B cell (primary cell): ENCODE measurements at regions of chr1 and their contacts with region 1.

Region 1: GRCh38 chr1:37890378-37891014 is 31.1 kb upstream of the MTF1 start:
- DNase-seq: peak; percentile 69
- ATAC-seq: peak; percentile 61
- H3K4me3 ChIP-seq: no peak overlapping the region
- H3K4me3 Mint-ChIP-seq: no peak overlapping the region
- H3K27ac ChIP-seq: peak overlapping the region in 1 of 2 donors; percentile 43
- H3K27ac Mint-ChIP-seq: peak overlapping the region; percentile 23
- H3K4me1 ChIP-seq: no peaks in the 10 kb centered on the region
- H3K4me1 Mint-ChIP-seq: peaks cover 2% of the 10 kb centered on the region
- H3K27me3 ChIP-seq: no peaks in the 10 kb centered on the region
- H3K27me3 Mint-ChIP-seq: no peaks in the 10 kb centered on the region
- CTCF ChIP-seq: peak; percentile 81

Region 2: GRCh38 chr1:37926038-37926924 is 35.8 kb after region 1 on chr1:
- CTCF ChIA-PET with region 1: interaction called, 11 read pairs
- POLR2A ChIA-PET with region 1: no interaction called
- intact Hi-C with region 1: no loop called
- DNase-seq: peak; percentile 37
- ATAC-seq: no peak
- H3K4me3 ChIP-seq: peak overlapping the region in 2 of 5 experiments; percentile 28 to 42
- H3K4me3 Mint-ChIP-seq: peak overlapping the region; percentile 77
- H3K27ac ChIP-seq: peak overlapping the region; percentile 37 to 72
- H3K27ac Mint-ChIP-seq: peak overlapping the region; percentile 81
- H3K4me1 ChIP-seq: peaks cover 58 to 76% of the 10 kb centered on the region in 2 donors
- H3K4me1 Mint-ChIP-seq: peaks cover 65% of the 10 kb centered on the region
- H3K27me3 ChIP-seq: no peaks in the 10 kb centered on the region
- H3K27me3 Mint-ChIP-seq: no peaks in the 10 kb centered on the region
- CTCF ChIP-seq: no peak

Region 3: GRCh38 chr1:37931361-37932158 is 41.1 kb after region 1 on chr1:
- CTCF ChIA-PET with region 1: interaction called, 76 read pairs
- POLR2A ChIA-PET with region 1: no interaction called
- intact Hi-C with region 1: loop called (anchors 1 kb)
- DNase-seq: peak; percentile 97
- ATAC-seq: peak; percentile 99
- H3K4me3 ChIP-seq: peak overlapping the region; percentile 69 to 98 (median 97)
- H3K4me3 Mint-ChIP-seq: peak overlapping the region; percentile 89
- H3K27ac ChIP-seq: peak overlapping the region in 1 of 2 donors; percentile 80
- H3K27ac Mint-ChIP-seq: peak overlapping the region; percentile 83
- H3K4me1 ChIP-seq: peaks cover 18 to 28% of the 10 kb centered on the region in 2 donors
- H3K4me1 Mint-ChIP-seq: peaks cover 42% of the 10 kb centered on the region
- H3K27me3 ChIP-seq: no peaks in the 10 kb centered on the region
- H3K27me3 Mint-ChIP-seq: no peaks in the 10 kb centered on the region
- CTCF ChIP-seq: no peak

Region 4: DNA sequence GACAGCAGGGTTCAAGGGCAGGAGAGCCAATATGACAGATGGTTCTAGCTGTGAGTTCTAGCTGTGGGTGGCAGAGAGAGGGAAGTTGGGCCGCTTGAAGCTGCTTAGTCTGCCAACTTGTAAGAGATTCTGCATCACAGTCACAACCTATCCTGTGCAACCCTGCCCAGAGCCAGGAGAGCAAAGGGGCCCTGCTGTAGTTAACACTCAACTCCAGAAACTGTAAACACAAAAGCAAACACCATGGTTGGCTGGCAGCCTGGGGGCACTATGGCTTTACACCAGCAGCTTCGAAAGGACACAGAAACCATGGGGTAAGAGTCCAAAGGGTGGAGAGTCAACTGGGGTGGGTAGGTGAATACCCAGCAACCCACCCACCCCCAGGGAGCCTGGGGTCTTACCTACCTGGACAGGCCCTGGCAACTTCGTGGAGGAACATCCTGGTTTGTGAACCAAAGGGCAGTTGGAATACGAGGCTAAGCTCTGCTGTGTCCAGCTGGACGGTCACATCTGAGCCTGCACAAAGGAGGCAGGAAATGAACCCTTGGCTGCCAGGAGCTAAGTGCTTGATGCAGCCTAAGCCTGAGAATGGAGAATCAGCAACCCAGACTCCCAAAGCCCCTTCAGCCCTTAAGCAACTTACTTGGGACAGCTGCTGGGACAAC is 49.9 kb after region 1 on chr1:
- CTCF ChIA-PET with region 1: interaction called, 76 read pairs
- POLR2A ChIA-PET with region 1: no interaction called
- intact Hi-C with region 1: loop called (anchors 1 kb)
- DNase-seq: no peak
- ATAC-seq: no peak
- H3K4me3 ChIP-seq: no peak overlapping the region
- H3K4me3 Mint-ChIP-seq: no peak overlapping the region
- H3K27ac ChIP-seq: no peak overlapping the region
- H3K27ac Mint-ChIP-seq: no peak overlapping the region
- H3K4me1 ChIP-seq: no peaks in the 10 kb centered on the region
- H3K4me1 Mint-ChIP-seq: peaks cover 1% of the 10 kb centered on the region
- H3K27me3 ChIP-seq: no peaks in the 10 kb centered on the region
- H3K27me3 Mint-ChIP-seq: no peaks in the 10 kb centered on the region
- CTCF ChIP-seq: no peak

Region 5: DNA sequence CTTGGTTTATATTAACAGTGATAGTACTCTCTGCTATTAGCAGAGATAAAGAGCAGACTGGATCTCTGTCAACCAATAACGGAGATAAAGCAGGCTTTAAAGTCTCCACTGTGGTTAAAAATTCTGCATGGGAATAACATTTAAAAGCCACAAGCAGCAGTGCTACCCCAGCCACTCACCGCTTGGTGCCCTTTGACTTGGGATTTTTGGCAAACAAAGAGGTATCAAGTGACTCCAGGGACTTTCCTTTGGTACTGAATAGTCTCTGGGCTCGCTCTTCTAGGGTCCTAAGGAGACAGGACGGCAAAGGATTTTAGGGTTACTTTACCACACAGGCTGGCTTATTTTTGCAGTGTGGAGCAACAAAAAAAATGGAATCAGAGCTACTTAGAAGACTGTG is 88.0 kb after region 1 on chr1:
- CTCF ChIA-PET with region 1: interaction called, 63 read pairs
- POLR2A ChIA-PET with region 1: interaction called, 4 read pairs
- intact Hi-C with region 1: no loop called
- DNase-seq: no peak
- ATAC-seq: no peak
- H3K4me3 ChIP-seq: no peak overlapping the region
- H3K4me3 Mint-ChIP-seq: no peak overlapping the region
- H3K27ac ChIP-seq: no peak overlapping the region
- H3K27ac Mint-ChIP-seq: no peak overlapping the region
- H3K4me1 ChIP-seq: no peaks in the 10 kb centered on the region
- H3K4me1 Mint-ChIP-seq: no peaks in the 10 kb centered on the region
- H3K27me3 ChIP-seq: no peaks in the 10 kb centered on the region
- H3K27me3 Mint-ChIP-seq: no peaks in the 10 kb centered on the region
- CTCF ChIP-seq: no peak

Region 6: DNA sequence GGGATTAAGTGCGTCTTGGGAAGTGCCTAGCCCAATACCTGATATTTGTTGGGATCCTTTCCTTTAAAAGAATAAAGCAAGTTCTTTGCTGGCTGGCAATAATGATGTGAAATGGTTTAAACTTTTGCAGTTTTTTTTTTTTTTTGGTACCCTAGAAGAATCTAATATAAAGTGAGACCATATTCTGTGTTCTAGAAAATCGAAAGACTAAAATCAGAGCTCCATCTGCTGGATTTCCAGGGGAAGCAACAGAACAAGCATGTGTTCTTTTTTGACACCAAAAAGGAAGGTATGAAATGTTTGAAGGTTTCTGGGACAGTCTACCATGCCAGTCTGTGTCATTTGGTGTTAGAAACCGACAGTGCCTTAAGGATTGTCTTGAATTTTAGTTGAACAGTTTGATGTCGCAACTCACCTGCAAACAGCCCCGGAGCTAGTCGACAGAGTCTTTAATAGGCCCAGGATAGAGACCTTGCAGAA is 128.4 kb after region 1 on chr1:
- CTCF ChIA-PET with region 1: interaction called, 8 read pairs
- POLR2A ChIA-PET with region 1: no interaction called
- intact Hi-C with region 1: loop called (anchors 1 kb)
- DNase-seq: no peak
- ATAC-seq: no peak
- H3K4me3 ChIP-seq: no peak overlapping the region
- H3K4me3 Mint-ChIP-seq: no peak overlapping the region
- H3K27ac ChIP-seq: no peak overlapping the region
- H3K27ac Mint-ChIP-seq: no peak overlapping the region
- H3K4me1 ChIP-seq: peaks cover 4% of the 10 kb centered on the region in 2 donors
- H3K4me1 Mint-ChIP-seq: peaks cover 8% of the 10 kb centered on the region
- H3K27me3 ChIP-seq: no peaks in the 10 kb centered on the region
- H3K27me3 Mint-ChIP-seq: no peaks in the 10 kb centered on the region
- CTCF ChIP-seq: peak; percentile 57

Region 7: GRCh38 chr1:38834937-38835827 is 944.7 kb after region 1 on chr1:
- CTCF ChIA-PET with region 1: interaction called, 3 read pairs
- POLR2A ChIA-PET with region 1: no interaction called
- intact Hi-C with region 1: loop called (anchors 5 kb)
- DNase-seq: peak; percentile 84
- ATAC-seq: peak; percentile 78
- H3K4me3 ChIP-seq: no peak overlapping the region
- H3K4me3 Mint-ChIP-seq: no peak overlapping the region
- H3K27ac ChIP-seq: no peak overlapping the region
- H3K27ac Mint-ChIP-seq: no peak overlapping the region
- H3K4me1 ChIP-seq: peaks cover 0 to under 1% of the 10 kb centered on the region in 2 donors
- H3K4me1 Mint-ChIP-seq: peaks cover 3% of the 10 kb centered on the region
- H3K27me3 ChIP-seq: peaks cover 0 to 8% (median 2%) of the 10 kb centered on the region in 4 experiments
- H3K27me3 Mint-ChIP-seq: peaks cover 6% of the 10 kb centered on the region
- CTCF ChIP-seq: peak; percentile 88

Region 8: DNA sequence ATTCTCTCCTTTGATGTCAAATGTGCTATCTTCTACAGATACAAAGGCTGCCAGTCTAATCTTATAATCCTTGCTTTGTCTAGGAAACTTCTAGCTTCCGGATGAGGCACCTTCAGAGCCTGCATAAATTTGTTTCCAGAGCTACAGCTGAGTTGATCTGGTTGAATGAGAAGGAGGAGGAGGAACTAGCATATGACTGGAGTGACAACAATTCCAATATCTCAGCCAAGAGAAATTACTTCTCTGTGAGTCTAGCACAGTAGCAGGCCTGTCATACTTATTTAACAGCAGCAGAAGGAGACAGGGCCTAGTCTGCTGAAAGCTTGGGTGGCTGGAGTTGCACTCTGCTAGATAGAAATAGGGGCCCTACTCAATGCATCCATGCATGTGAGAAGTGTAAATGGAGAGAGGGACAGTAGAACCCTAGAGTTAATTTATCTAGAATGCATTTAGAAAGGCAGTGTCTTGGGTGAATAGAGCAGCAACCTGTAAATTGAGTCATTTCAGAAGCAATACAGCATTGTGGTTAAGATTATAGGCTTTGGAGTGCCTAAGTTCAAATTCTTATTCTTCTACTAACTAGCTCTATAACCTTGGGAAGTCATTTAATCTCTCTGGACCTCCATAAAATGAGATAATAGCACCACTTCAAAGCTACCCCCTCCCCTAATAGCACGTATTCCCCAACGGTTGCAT is 1403.0 kb after region 1 on chr1:
- CTCF ChIA-PET with region 1: no interaction called
- POLR2A ChIA-PET with region 1: no interaction called
- intact Hi-C with region 1: no loop called
- DNase-seq: no peak
- ATAC-seq: no peak
- H3K4me3 ChIP-seq: no peak overlapping the region
- H3K4me3 Mint-ChIP-seq: no peak overlapping the region
- H3K27ac ChIP-seq: no peak overlapping the region
- H3K27ac Mint-ChIP-seq: no peak overlapping the region
- H3K4me1 ChIP-seq: no peaks in the 10 kb centered on the region
- H3K4me1 Mint-ChIP-seq: no peaks in the 10 kb centered on the region
- H3K27me3 ChIP-seq: no peaks in the 10 kb centered on the region
- H3K27me3 Mint-ChIP-seq: no peaks in the 10 kb centered on the region
- CTCF ChIP-seq: no peak